Mammary epithelial cell (primary cell): ENCODE measurements at regions of chr5 and their contacts with region 1.

Region 1: DNA sequence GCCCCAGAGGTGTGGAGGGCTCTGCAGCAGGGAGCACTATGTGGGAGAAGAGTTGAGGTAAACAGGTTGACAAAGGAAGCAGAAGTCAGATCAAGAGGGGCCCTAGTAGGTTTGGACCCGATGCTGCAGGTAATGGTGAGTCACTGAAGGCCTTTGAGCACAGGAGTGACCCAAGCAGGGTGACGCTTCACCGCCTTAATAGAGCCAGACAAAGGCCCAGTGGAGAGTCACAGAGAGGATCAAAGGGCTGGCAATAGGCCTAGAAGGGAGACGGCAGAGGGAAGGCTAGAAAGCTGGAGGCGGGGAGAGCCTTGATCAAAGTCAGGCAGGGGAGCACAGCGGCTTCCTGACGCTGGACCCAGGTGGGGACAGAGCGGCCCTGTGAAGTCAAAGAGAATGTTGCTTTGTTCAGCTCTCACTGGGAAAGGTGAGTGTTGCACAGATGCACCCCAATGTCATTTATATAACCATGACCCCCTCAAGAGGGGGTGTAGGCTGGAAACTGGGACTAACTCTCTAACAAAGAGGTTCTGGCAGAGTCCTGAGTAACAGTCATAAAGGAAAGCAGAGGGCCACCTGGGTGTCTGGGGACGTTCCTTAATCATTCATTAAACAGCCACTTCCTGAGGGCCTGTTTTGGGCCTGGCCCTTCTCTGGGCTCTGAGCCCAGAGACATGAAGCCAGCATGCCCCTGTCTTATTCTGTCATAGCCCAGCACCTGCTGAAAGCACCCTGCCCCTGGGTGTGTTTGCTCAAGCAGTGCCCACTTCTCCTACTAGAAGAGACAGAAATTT is 9.8 kb upstream of the CPLX2 start:
- DNase-seq: no peak
- H3K4me3 ChIP-seq: no peak overlapping the region
- H3K27ac ChIP-seq: no peak overlapping the region
- H3K4me1 ChIP-seq: no peaks in the 10 kb centered on the region
- H3K27me3 ChIP-seq: no peaks in the 10 kb centered on the region
- CTCF ChIP-seq: no peak

Region 2: DNA sequence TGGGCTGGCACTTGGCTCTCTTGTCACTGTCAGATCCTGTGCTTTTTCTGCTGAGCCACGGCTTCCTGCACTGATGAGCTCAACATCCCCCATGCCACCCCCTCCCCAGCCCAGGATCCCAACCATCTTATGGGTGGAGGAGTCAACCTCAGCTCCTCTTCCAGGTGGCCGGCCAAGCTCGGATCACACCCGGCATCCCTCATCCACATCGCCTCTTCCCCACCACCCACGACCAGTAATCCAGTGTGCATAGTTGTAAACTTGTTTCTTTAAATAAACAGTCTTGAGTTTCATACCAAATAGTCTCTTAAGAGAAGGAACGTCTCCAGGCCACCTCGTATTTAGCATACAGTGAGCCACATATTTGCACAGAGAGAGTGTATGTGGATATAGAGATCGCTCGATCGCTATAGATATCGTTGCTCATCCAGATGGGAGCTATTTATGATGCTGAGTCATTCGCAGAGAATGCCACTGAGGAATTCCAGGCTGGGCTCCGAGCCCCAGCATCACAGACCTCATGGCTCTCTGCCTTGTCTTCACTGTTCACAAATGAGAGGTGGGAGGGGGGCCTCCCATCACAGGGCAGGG is 51.9 kb before region 1 on chr5:
- CTCF ChIA-PET with region 1: no interaction called
- dilution Hi-C with region 1: loop called (anchors 5 kb)
- in situ Hi-C with region 1: no loop called
- intact Hi-C with region 1: no loop called
- DNase-seq: peak; percentile 63
- H3K4me3 ChIP-seq: no peak overlapping the region
- H3K27ac ChIP-seq: no peak overlapping the region
- H3K4me1 ChIP-seq: peaks cover 27% of the 10 kb centered on the region
- H3K27me3 ChIP-seq: peaks cover 3% of the 10 kb centered on the region
- CTCF ChIP-seq: no peak

Region 3: DNA sequence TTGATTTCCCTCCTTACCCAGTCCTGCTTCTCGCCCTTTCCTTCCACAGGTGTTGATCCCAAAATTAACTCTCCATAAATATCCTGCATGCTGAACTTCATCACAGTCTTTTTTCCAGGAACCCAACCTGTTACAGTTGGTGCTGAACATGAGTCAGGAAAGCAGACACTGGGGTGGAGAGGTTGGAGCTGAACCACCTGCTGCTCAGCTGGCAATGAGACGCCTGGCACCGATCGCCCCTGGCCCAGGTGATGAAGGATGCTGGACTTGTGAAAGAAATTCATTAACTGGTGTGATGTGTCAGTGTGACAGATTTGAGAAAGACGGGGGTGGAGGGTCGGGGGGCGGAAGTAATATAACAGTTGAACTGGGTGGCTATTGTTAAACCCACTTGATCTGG is 40.5 kb after region 1 on chr5:
- CTCF ChIA-PET with region 1: no interaction called
- dilution Hi-C with region 1: no loop called
- in situ Hi-C with region 1: no loop called
- intact Hi-C with region 1: no loop called
- DNase-seq: no peak
- H3K4me3 ChIP-seq: no peak overlapping the region
- H3K27ac ChIP-seq: no peak overlapping the region
- H3K4me1 ChIP-seq: no peaks in the 10 kb centered on the region
- H3K27me3 ChIP-seq: no peaks in the 10 kb centered on the region
- CTCF ChIP-seq: no peak